ENCODE measurements at regions of chr10 and their contacts with region 1.

Region 1: DNA sequence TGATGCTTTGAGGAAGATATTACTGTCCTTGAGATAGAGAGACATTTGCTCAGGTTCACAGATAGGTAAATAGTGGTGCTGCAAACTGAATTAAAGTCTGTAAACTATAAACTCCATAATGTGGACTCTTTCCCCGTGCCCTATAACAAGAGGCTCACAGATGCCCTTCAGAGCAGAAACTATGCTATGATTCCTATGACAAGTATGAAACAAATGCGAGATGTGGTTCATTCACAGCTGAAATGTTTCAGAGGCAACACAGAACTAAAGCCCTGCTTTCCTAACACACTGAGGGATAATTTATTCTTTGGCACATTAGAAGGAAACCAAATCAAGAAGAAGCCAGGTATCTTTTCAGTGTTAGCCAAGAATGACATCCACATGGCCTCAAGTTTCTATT is 13.4 kb downstream of the CHUK start:
- DNase-seq: no peak
- H3K4me3 Mint-ChIP-seq: no peak overlapping the region
- H3K27ac Mint-ChIP-seq: no peak overlapping the region
- H3K4me1 Mint-ChIP-seq: no peaks in the 10 kb centered on the region
- H3K27me3 Mint-ChIP-seq: no peaks in the 10 kb centered on the region
- CTCF ChIP-seq: no peak

Region 2: DNA sequence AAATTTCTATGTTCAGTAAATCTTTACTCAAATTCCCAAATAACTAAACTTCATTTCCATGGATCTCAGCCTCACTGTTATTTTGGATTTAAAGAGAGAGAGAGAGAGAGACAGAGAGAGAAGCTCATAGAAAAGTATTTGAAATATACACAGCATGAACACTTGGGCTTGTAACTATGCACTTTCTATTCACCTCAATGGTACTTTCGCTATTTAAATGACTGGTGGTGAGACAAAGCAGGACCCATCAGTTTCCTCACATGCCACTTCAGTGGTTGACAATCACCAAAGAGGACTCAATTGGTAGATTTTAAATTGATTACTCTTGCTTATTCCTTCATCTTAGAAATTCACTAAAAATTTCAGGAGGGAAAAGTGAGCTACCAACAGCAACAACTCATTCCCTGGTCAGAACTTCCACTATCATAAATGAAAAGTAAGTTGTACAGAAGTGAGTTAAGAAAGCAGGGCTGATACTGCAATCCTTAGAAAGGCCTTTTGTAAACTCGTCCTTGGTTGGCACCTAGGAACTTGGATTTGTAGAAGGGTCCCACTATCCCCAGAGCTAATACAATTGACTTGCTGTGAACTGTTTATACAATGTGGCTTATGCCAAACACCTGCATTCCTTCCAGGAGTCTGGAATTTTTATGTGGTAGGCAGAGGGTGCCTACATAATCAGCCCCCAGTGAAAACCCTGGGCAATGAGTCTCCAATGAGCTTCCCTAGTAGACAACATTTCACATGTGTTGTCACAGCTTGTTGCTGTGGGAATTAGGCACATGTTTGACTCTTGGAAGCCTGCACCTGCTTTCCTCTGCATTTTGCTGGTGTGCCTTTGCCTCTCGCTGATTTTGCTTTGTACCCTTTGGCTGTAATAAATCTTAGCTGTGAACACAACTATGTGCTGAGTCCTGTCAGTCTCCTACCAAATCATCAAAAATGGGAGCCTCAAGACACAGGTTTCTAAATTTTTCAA is 41.0 kb before region 1 on chr10:
- CTCF ChIA-PET with region 1: no interaction called
- POLR2A ChIA-PET with region 1: no interaction called
- intact Hi-C with region 1: loop called (anchors 1 kb)
- DNase-seq: no peak
- H3K4me3 Mint-ChIP-seq: no peak overlapping the region
- H3K27ac Mint-ChIP-seq: no peak overlapping the region
- H3K4me1 Mint-ChIP-seq: peaks cover 11% of the 10 kb centered on the region
- H3K27me3 Mint-ChIP-seq: no peaks in the 10 kb centered on the region
- CTCF ChIP-seq: no peak

Measured in MCF 10A (cell line).